Heart left ventricle (tissue), 16 donors: ENCODE measurements at regions of chr6 and their contacts with region 1.

Region 1: DNA sequence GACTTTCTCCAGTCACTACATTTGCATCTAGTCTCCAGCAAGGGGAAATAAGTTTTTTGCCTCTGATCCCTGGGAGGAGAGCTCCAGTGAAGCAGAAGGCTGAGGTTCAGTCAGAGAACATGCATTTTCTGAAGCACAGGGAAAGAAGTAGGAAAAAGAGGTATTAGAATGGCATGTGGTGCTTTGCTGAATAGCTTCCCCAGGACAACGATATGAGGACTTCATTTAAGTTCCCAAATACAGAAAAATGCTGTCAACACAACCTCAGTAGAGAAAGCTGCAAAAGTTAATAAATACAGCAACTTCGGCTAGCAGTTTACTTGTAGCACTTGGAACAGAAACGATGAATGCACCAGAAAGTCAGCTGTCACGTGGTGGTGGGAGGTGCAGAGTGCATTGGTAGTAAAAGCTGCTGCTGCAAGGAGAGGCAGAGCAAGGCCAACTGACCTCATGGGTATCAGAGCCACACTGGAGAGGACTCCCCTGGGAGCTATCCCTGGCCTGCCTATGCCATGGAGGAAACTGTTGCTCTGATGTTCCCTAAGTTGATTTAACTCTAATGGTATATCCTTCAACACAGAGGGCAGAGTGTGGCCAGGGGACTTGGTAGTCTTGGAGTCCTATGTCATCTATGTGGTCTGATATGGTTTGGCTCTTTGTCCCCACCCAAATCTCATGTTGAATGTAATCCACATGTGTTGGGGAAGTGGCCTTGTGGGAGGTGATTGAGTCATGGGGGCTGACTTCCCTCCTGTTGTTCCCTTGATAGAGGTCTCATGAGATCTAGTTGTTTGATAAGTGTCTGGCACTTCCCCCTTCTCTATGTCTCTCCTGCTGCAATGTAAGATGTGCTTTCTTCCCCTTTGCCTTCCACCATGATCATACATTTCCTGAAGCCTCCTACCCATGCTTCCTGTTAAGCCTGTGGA is 85.9 kb downstream of the ADTRP start:
- DNase-seq: no peak
- ATAC-seq: no peak
- H3K4me3 ChIP-seq: no peak overlapping the region
- H3K27ac ChIP-seq: no peak overlapping the region
- H3K4me1 ChIP-seq: no peaks in the 10 kb centered on the region
- H3K27me3 ChIP-seq: peaks cover 0 to 2% (median 0%) of the 10 kb centered on the region in 9 donors
- CTCF ChIP-seq: no peak
- POLR2A ChIP-seq: no peak

Region 2: DNA sequence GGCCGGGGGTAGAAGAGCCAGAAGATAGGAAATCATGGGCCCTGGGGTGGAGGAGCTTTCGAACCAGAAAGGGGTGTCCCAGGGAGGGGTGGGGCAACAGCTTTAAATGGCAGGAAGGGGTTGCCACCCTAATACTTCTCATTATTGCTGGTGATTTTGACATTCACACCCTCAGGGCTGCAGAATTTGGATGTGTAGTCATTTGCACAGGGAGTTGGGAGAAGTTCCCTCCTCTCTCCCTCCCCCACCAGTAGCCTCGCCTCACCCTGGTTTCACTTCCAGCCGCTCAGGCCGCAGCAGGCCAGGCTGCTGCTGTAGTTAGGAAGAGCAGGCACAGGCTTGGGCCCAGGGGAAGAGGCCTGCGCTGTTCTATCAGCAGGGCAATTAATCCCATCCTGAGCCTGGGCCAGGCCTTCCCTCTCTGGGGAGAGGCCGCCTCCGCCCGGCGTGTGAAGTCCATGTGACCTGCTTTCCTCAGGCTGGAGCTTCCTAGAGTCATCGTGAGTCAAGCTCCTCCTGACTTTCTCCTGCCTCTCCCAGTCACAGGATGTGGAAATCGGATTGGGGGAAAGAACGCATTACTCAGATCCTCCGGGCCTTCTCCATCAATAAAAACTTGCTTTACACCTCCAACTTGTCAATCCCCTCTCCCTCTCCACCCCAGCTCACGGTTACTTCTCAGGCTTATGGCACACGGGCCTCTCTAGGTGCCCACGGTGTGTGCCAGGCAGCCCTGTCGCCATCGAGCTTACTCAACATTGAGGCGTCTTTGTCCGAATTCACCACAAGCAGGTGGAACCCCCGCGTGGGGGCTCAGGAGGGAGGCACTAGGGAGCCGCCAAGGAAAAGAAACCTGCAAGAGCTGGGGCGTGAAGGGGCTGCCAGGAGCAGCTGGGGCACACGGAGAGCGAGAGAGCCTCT is 78.1 kb after region 1 on chr6:
- intact Hi-C with region 1: no loop called
- DNase-seq: peak; percentile 88 to 94 (median 91)
- ATAC-seq: peak; percentile 91 to 98 (median 97)
- H3K4me3 ChIP-seq: peak overlapping the region in 4 of 12 donors; percentile 1 to 24 (median 14)
- H3K27ac ChIP-seq: peak overlapping the region; percentile 29 to 87 (median 74)
- H3K4me1 ChIP-seq: peaks cover 0 to 23% (median 11%) of the 10 kb centered on the region in 12 donors
- H3K27me3 ChIP-seq: no peaks in the 10 kb centered on the region
- CTCF ChIP-seq: no peak
- POLR2A ChIP-seq: no peak

Region 3: GRCh38 chr6:12075067-12075563 is 382.4 kb after region 1 on chr6:
- intact Hi-C with region 1: loop called in 4 of 10 experiments (anchors 10 kb)
- DNase-seq: no peak
- ATAC-seq: no peak
- H3K4me3 ChIP-seq: no peak overlapping the region
- H3K27ac ChIP-seq: no peak overlapping the region
- H3K4me1 ChIP-seq: peaks cover 0 to 17% (median 0%) of the 10 kb centered on the region in 12 donors
- H3K27me3 ChIP-seq: no peaks in the 10 kb centered on the region
- CTCF ChIP-seq: peak in 9 of 12 donors; percentile 36 to 57 (median 44)
- POLR2A ChIP-seq: no peak

Region 4: GRCh38 chr6:12228447-12229146 is 535.9 kb after region 1 on chr6:
- intact Hi-C with region 1: loop called in 3 of 10 experiments (anchors 5 to 10 kb)
- DNase-seq: no peak
- ATAC-seq: no peak
- H3K4me3 ChIP-seq: no peak overlapping the region
- H3K27ac ChIP-seq: no peak overlapping the region
- H3K4me1 ChIP-seq: peaks cover 0 to 14% (median 0%) of the 10 kb centered on the region in 12 donors
- H3K27me3 ChIP-seq: no peaks in the 10 kb centered on the region
- CTCF ChIP-seq: no peak
- POLR2A ChIP-seq: no peak